Testis (tissue), 5 donors: ENCODE measurements at regions of chr5 and their contacts with region 1.

Region 1: DNA sequence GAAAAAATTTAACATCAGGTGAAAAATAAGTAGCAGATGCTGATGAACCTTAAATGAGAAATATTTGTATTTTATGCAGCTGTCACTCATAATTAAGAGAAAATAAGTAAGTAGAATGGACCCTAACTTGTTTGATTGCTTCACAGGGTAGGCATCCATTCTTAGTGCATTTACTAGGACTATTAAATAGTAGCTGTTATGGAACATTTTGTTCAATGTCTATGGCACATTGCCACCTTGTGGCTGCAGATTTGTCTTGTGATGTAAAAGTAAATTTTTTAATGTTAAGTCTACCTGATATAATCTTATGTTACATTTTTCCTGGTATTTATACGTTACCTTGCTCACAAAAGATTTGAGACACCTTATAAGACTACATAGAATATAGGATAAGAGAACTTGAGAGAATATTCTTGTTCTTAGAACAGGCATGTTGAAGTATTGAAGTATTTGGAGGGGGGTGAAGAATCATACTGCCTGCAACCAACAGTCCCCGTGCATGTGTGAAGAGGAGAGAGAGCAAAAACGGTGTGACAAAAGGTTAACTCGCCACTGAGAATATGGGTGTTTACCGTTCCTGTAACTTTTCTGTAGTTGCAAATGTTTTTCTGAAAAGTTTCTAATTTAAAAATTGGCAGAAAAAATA is 161.1 kb downstream of the MAST4 start:
- DNase-seq: peak; percentile 86
- H3K4me3 ChIP-seq: no peak overlapping the region
- H3K27ac ChIP-seq: no peak overlapping the region
- H3K4me1 ChIP-seq: peaks cover 5% of the 10 kb centered on the region
- H3K27me3 ChIP-seq: no peaks in the 10 kb centered on the region
- CTCF ChIP-seq: peak; percentile 33 to 40 (median 33)
- POLR2A ChIP-seq: no peak

Region 2: GRCh38 chr5:66306105-66306843 is 451.0 kb before region 1 on chr5:
- intact Hi-C with region 1: loop called (anchors 10 kb)
- DNase-seq: peak; percentile 75
- H3K4me3 ChIP-seq: no peak overlapping the region
- H3K27ac ChIP-seq: no peak overlapping the region
- H3K4me1 ChIP-seq: no peaks in the 10 kb centered on the region
- H3K27me3 ChIP-seq: no peaks in the 10 kb centered on the region
- CTCF ChIP-seq: peak; percentile 53 to 67 (median 65)
- POLR2A ChIP-seq: no peak